ENCODE measurements at regions of chr4 and their contacts with region 1.

Region 1: DNA sequence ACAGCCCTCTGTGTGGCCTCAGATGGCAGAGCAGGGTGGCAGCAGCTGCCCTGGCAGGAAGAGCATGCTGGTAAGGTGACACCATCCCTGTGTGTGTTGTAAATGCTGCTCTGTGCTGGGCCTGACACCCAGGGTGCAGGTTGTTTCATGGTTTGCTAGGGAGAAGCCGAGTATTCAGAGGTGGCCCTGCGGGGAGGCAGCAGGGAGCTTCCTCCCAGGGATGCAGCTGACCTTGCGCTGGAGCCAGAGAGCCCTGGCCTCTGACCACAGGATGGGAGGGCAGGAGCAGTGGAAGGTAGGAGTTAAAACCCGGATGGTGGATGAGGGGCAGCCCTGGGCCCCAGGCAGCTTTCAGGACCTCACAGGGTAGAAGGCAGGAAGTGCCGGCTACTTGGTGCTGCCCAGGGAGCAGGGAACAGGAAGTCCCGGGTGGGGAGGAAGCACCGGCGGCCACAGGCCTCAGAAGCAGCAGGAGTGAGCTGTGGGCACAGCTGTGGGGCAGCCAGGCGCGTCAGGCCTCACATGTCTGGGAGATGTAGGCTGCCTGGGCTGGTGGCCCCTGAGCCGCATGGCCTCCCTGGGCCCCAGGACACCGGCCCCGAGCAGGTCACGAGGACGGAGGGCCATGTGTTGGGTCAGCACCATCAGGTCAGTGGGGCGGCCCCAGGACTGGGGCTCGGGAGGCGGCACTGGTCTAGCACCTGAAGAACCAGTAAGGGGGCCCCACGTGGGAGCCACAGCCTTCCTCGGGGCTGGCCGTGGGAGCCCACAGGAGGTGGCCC is 19.1 kb downstream of the SH3BP2 start:
- DNase-seq: peak; percentile 64 to 93 (median 87)
- H3K4me3 ChIP-seq: peak overlapping the region in 5 of 7 experiments; percentile 31 to 77 (median 61)
- H3K27ac ChIP-seq: peak overlapping the region in 1 of 2 experiments; percentile 60
- H3K4me1 ChIP-seq: peaks cover 5 to 77% (median 68%) of the 10 kb centered on the region in 4 experiments
- H3K27me3 ChIP-seq: no peaks in the 10 kb centered on the region

Region 2: GRCh38 chr4:2552806-2553205 is 259.2 kb before region 1 on chr4:
- CTCF ChIA-PET with region 1: no interaction called
- POLR2A ChIA-PET with region 1: no interaction called
- DNase-seq: no peak
- H3K4me3 ChIP-seq: no peak overlapping the region
- H3K27ac ChIP-seq: no peak overlapping the region
- H3K4me1 ChIP-seq: peaks cover 0 to 5% (median 1%) of the 10 kb centered on the region in 4 experiments
- H3K27me3 ChIP-seq: no peaks in the 10 kb centered on the region

Region 3: DNA sequence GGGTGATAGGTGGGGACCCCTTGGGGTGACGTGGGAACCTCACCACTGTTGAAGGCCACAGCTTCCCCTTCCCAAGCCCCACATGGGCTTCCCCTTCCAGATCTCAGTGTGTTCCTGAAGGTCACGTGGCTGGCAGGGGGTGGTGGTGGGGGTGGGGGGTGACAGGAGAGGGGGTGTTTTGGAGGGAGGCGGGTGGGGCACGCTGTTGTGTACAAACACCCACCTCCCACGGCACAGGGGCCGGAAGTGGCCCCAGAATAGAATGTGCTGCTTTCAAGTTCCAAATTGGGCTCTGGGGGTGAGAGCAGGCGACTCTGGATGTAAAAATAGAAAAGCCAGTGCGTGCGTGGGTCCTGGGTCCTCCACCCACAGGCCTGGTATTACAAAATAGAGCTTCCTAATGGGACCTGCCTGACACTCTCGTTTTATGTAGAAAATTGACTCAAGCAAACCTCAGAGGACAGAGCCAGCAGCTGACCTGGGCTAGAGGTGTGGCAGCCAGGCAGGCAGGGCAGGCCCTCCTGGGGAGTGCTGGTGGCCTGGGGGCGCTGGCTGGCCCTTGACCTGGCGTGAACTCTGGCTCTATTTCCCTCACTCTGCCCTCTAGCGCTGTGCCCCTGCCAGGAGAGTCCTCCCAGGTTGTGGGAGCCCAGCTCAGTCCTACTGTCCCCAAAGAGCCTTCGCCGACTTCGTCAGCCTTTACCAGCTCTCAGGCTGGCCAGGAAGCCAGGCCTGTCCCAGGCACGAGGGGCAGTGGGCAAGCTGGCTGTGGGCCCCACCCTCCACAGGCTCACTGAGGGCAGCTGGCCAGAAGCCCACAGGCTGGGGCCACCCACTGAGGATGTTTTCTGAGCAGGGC is 24.6 kb before region 1 on chr4:
- CTCF ChIA-PET with region 1: interaction called, 11 read pairs
- POLR2A ChIA-PET with region 1: interaction called, 3 read pairs
- DNase-seq: peak; percentile 68 to 94 (median 94)
- H3K4me3 ChIP-seq: peak overlapping the region in 3 of 7 experiments; percentile 4 to 36 (median 11)
- H3K27ac ChIP-seq: peak overlapping the region; percentile 44 to 73
- H3K4me1 ChIP-seq: peaks cover 0 to 65% (median 52%) of the 10 kb centered on the region in 4 experiments
- H3K27me3 ChIP-seq: no peaks in the 10 kb centered on the region

Region 4: GRCh38 chr4:2800691-2801596 is 11.1 kb before region 1 on chr4:
- CTCF ChIA-PET with region 1: interaction called, 34 read pairs
- POLR2A ChIA-PET with region 1: interaction called, 8 read pairs
- DNase-seq: peak; percentile 63 to 86 (median 82)
- H3K4me3 ChIP-seq: peak overlapping the region in 5 of 7 experiments; percentile 15 to 42 (median 26)
- H3K27ac ChIP-seq: peak overlapping the region in 1 of 2 experiments; percentile 73
- H3K4me1 ChIP-seq: peaks cover 5 to 98% (median 89%) of the 10 kb centered on the region in 4 experiments
- H3K27me3 ChIP-seq: no peaks in the 10 kb centered on the region